Calu3 (cell line): ENCODE measurements at regions of chr3 and their contacts with region 1.

Region 1: DNA sequence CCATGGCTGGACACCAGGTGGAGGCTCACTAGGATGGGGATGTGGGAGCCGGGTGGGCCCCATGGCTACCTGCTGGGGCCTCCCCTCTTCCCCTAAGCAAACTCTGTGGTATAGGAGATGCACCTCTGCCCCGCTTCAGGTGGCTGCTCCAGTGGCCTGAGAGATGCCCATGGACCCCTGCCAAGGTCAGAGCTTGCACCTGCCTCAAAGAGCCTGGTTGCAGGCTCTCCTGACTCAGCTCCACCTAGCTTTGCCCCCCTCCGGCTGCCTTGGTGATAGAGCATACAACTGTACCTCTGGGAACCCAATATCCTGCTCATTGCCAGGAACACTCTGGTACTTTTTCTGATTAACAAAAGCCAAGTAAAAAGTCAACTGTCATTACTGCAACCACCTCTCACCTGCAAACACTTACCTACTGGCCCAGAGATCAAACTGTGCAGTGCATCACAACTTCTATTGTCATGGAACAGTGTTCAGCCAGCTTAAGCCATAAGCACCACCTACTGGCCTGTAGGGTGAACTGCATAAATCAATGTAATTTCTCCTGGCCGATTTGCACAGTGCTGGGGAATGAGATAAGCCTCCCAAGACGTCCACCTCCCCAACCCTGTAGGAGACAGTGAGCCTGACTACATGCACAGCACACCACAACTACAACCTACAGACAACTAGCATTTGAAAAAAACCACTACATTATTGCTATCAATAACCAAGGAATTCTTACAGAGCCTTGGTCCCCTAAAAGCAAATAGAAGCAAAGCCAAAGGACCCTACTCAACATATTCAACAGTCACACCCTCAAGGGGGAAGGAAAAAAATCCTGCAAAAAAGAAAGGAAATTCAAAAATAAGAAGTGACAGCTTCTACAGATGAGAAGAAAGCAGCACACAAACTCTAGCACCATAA is 352.4 kb upstream of the ARHGEF26 start:
- DNase-seq: peak; percentile 75
- H3K4me3 Mint-ChIP-seq: no peak overlapping the region
- H3K27ac Mint-ChIP-seq: no peak overlapping the region
- H3K4me1 Mint-ChIP-seq: peaks cover 11% of the 10 kb centered on the region
- H3K27me3 Mint-ChIP-seq: no peaks in the 10 kb centered on the region
- CTCF ChIP-seq: peak; percentile 96

Region 2: GRCh38 chr3:153026026-153026425 is 742.8 kb before region 1 on chr3:
- CTCF ChIA-PET with region 1: no interaction called
- intact Hi-C with region 1: loop called (anchors 2 kb)
- DNase-seq: no peak
- H3K4me3 Mint-ChIP-seq: no peak overlapping the region
- H3K27ac Mint-ChIP-seq: no peak overlapping the region
- H3K4me1 Mint-ChIP-seq: no peaks in the 10 kb centered on the region
- H3K27me3 Mint-ChIP-seq: no peaks in the 10 kb centered on the region
- CTCF ChIP-seq: peak; percentile 63

Region 3: GRCh38 chr3:153209596-153209995 is 559.2 kb before region 1 on chr3:
- CTCF ChIA-PET with region 1: no interaction called
- intact Hi-C with region 1: loop called (anchors 10 kb)
- DNase-seq: peak; percentile 57
- H3K4me3 Mint-ChIP-seq: no peak overlapping the region
- H3K27ac Mint-ChIP-seq: no peak overlapping the region
- H3K4me1 Mint-ChIP-seq: peaks cover 16% of the 10 kb centered on the region
- H3K27me3 Mint-ChIP-seq: no peaks in the 10 kb centered on the region
- CTCF ChIP-seq: no peak

Region 4: DNA sequence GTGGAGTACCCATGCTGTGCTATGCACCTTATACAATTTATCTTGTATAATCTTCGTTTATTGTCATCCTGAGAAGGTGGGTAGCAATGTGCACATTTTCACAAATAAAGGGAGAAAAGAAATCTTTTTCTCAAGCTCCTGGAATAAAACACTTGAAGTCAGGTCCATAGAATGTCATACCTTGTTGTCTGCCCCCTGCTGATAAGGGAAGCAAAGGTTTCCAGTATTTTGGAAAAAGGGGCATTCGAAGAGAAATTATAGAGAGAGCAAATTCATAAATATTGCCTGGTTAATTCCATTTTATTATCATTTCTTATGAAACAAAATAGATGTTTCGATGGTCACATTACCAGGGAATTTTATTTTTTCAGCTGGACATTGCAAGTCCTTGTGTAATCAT is 329.0 kb before region 1 on chr3:
- CTCF ChIA-PET with region 1: no interaction called
- intact Hi-C with region 1: loop called (anchors 5 kb)
- DNase-seq: no peak
- H3K4me3 Mint-ChIP-seq: no peak overlapping the region
- H3K27ac Mint-ChIP-seq: no peak overlapping the region
- H3K4me1 Mint-ChIP-seq: peaks cover 30% of the 10 kb centered on the region
- H3K27me3 Mint-ChIP-seq: no peaks in the 10 kb centered on the region
- CTCF ChIP-seq: no peak

Region 5: GRCh38 chr3:153640689-153641301 is 128.0 kb before region 1 on chr3:
- CTCF ChIA-PET with region 1: no interaction called
- intact Hi-C with region 1: no loop called
- DNase-seq: peak; percentile 40
- H3K4me3 Mint-ChIP-seq: no peak overlapping the region
- H3K27ac Mint-ChIP-seq: no peak overlapping the region
- H3K4me1 Mint-ChIP-seq: peaks cover 10% of the 10 kb centered on the region
- H3K27me3 Mint-ChIP-seq: no peaks in the 10 kb centered on the region
- CTCF ChIP-seq: no peak

Region 6: GRCh38 chr3:153704115-153704514 is 64.7 kb before region 1 on chr3:
- CTCF ChIA-PET with region 1: no interaction called
- intact Hi-C with region 1: loop called (anchors 1 kb)
- DNase-seq: peak; percentile 7
- H3K4me3 Mint-ChIP-seq: no peak overlapping the region
- H3K27ac Mint-ChIP-seq: no peak overlapping the region
- H3K4me1 Mint-ChIP-seq: no peaks in the 10 kb centered on the region
- H3K27me3 Mint-ChIP-seq: no peaks in the 10 kb centered on the region
- CTCF ChIP-seq: no peak